Caco-2 (cell line): ENCODE measurements at regions of chr5 and their contacts with region 1.

Region 1: DNA sequence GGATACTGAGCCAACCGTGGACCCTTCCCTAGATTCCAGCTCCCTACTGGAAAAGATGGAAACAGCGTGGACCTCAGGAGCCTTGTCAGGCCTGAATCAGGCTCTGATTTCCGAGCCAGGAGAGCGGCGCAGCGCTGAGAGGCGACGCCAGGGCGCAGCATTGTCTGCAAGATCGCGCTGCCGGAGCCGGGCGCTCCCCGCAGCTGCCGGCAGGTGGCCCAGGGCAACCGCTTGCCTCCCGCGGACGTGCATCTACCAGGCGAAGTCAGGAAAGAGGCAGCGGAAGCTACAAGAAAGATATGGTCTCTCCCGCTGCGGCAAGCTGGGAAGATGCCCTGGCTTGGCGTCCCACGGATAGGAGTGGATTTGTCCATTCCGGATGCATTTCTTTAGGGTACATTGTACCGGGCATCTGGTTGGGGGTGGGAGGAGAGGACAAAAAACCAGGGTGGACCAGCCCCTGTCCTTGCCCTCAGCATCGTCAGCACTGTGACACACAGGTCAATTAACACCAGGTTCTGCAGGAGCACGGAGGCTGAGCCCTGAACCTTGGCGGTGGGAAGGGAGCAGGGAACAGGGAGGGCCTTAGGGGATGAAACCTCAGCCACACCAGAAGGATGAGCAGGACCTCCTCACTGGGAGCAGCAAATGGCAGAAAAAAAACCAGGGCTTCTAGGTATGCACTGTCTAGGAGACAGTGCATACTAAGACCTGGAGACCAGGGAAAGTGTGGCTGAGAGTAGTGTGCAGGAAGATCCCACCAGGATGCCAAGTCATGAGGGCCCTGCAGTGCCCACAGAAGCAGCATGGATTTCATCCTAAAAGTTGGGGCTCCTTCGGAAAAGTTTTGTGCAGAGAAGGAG is 55.9 kb downstream of the SFXN1 start:
- DNase-seq: peak; percentile 75 to 88
- H3K4me3 ChIP-seq: no peak overlapping the region
- H3K4me3 Mint-ChIP-seq: no peak overlapping the region
- H3K27ac Mint-ChIP-seq: no peak overlapping the region
- H3K4me1 ChIP-seq: no peaks in the 10 kb centered on the region
- H3K4me1 Mint-ChIP-seq: no peaks in the 10 kb centered on the region
- H3K27me3 ChIP-seq: no peaks in the 10 kb centered on the region
- H3K27me3 Mint-ChIP-seq: no peaks in the 10 kb centered on the region
- CTCF ChIP-seq: peak; percentile 99 to 100

Region 2: DNA sequence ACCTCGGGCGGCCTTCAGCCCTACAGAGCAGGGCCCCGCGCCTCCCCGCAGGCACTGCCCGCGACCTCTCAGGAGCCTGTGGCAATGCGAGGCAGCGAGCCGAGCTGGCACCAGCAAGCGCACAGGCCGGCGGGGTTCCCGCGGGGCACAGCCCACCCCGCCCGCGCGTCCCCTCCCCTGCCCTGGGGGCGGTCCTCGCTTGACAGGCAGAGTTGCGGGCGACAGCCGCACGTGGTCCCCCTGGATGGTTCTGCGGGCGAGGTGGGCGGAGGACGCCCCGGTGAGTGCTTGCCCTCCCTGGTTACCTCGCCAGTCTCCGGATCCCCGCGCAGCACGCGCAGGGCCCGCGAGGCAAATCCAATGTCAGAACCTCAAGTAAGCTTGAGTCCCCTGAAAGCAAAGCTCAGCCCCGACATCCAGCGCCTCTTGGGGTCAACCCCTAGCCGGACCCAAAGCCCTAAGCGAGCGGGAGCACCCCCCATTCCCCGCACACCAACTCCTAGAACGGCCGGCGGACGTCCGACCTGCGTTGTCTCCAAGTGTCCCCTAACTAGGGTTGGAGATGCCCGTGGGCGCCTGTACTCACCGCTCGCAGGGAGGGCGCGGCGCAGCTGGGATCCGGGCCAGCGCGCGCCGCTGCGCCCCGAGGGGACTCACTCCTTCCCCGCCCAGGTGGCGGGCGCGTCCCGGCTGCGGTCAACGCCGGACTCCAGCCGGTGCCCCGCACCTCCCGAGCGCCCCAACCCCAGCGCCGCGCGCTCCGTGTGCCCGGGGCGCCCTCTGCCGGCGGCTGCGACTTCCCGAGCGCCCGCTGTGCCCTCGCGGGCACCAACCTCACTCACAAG is 90.0 kb before region 1 on chr5 and contains the start of gene DRD1:
- CTCF ChIA-PET with region 1: no interaction called
- POLR2A ChIA-PET with region 1: no interaction called
- intact Hi-C with region 1: no loop called
- DNase-seq: peak in 1 of 2 experiments; percentile 31
- H3K4me3 ChIP-seq: no peak within 1 kb of the TSS
- H3K4me3 Mint-ChIP-seq: no peak within 1 kb of the TSS
- H3K27ac Mint-ChIP-seq: peak within 1 kb of the TSS; percentile 32
- H3K4me1 ChIP-seq: no peaks in the 10 kb centered on the region
- H3K4me1 Mint-ChIP-seq: no peaks in the 10 kb centered on the region
- H3K27me3 ChIP-seq: no peaks in the 10 kb centered on the region
- H3K27me3 Mint-ChIP-seq: no peaks in the 10 kb centered on the region
- CTCF ChIP-seq: peak in 1 of 2 experiments; percentile 40
- total RNA-seq, gene DRD1: not detected in 2 replicates

Region 3: DNA sequence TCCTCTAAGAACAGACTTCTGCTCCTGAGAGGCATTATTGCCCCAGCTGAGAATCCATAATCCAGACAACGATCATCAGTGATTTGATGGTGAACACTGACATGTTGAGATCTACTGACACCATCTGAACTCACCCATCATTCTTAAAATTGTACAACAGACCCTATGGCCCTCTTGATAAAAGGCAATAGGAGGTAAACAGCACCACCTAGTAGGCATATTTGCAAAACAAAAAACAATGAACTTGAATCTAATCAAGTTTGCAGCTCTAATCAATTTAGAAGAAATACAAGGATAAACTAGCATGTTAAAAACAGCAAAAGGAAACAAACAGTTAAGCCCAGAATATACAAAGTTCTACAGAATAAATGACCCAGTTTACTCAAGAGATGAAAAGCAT is 33.7 kb after region 1 on chr5:
- CTCF ChIA-PET with region 1: interaction called, 25 read pairs
- POLR2A ChIA-PET with region 1: no interaction called
- intact Hi-C with region 1: loop called (anchors 1 kb)
- DNase-seq: no peak
- H3K4me3 ChIP-seq: no peak overlapping the region
- H3K4me3 Mint-ChIP-seq: no peak overlapping the region
- H3K27ac Mint-ChIP-seq: no peak overlapping the region
- H3K4me1 ChIP-seq: no peaks in the 10 kb centered on the region
- H3K4me1 Mint-ChIP-seq: no peaks in the 10 kb centered on the region
- H3K27me3 ChIP-seq: no peaks in the 10 kb centered on the region; the same call in 1 of the 2 replicates
- H3K27me3 Mint-ChIP-seq: peaks cover 8% of the 10 kb centered on the region
- CTCF ChIP-seq: no peak

Region 4: DNA sequence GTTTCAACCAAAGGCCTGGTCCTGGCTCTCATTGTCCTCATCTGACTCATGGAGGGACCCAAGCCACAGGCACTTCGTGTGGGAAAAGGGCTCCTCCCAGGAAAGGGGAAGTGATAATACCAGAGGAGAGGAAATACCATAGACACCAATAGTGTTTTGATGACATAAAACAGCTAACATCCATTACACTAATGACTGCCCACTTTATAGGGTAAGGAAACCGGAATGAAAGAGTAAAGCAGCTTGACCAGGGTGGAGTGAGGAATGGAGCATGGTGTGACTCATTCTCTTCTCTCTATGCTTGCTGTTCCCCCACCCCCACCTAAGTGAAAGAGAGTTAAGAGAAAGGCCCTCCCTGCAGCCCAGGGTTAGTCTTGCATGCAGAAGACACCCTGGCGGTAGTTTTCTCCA is 56.2 kb after region 1 on chr5:
- CTCF ChIA-PET with region 1: no interaction called
- POLR2A ChIA-PET with region 1: no interaction called
- intact Hi-C with region 1: no loop called
- DNase-seq: no peak
- H3K4me3 ChIP-seq: no peak overlapping the region
- H3K4me3 Mint-ChIP-seq: no peak overlapping the region
- H3K27ac Mint-ChIP-seq: no peak overlapping the region
- H3K4me1 ChIP-seq: no peaks in the 10 kb centered on the region
- H3K4me1 Mint-ChIP-seq: no peaks in the 10 kb centered on the region
- H3K27me3 ChIP-seq: no peaks in the 10 kb centered on the region
- H3K27me3 Mint-ChIP-seq: peaks cover 15% of the 10 kb centered on the region
- CTCF ChIP-seq: no peak

Region 5: GRCh38 chr5:175706499-175706898 is 172.2 kb after region 1 on chr5:
- CTCF ChIA-PET with region 1: interaction called, 12 read pairs
- POLR2A ChIA-PET with region 1: interaction called, 4 read pairs
- intact Hi-C with region 1: loop called (anchors 1 kb)
- DNase-seq: peak; percentile 84 to 88
- H3K4me3 ChIP-seq: no peak overlapping the region
- H3K4me3 Mint-ChIP-seq: no peak overlapping the region
- H3K27ac Mint-ChIP-seq: peak overlapping the region; percentile 63
- H3K4me1 ChIP-seq: peaks cover 15% of the 10 kb centered on the region
- H3K4me1 Mint-ChIP-seq: peaks cover 26% of the 10 kb centered on the region
- H3K27me3 ChIP-seq: no peaks in the 10 kb centered on the region
- H3K27me3 Mint-ChIP-seq: peaks cover 4% of the 10 kb centered on the region
- CTCF ChIP-seq: no peak

Region 6: GRCh38 chr5:175718401-175719108 is 184.3 kb after region 1 on chr5:
- CTCF ChIA-PET with region 1: interaction called, 63 read pairs
- POLR2A ChIA-PET with region 1: no interaction called
- intact Hi-C with region 1: loop called (anchors 2 kb)
- DNase-seq: peak; percentile 51 to 74
- H3K4me3 ChIP-seq: no peak overlapping the region
- H3K4me3 Mint-ChIP-seq: no peak overlapping the region
- H3K27ac Mint-ChIP-seq: peak overlapping the region; percentile 24
- H3K4me1 ChIP-seq: peaks cover 9% of the 10 kb centered on the region; the same call in 1 of the 2 replicates
- H3K4me1 Mint-ChIP-seq: peaks cover 11% of the 10 kb centered on the region
- H3K27me3 ChIP-seq: no peaks in the 10 kb centered on the region
- H3K27me3 Mint-ChIP-seq: no peaks in the 10 kb centered on the region
- CTCF ChIP-seq: peak; percentile 88 to 93